ENCODE measurements at regions of chr18 and their contacts with region 1.

Region 1: DNA sequence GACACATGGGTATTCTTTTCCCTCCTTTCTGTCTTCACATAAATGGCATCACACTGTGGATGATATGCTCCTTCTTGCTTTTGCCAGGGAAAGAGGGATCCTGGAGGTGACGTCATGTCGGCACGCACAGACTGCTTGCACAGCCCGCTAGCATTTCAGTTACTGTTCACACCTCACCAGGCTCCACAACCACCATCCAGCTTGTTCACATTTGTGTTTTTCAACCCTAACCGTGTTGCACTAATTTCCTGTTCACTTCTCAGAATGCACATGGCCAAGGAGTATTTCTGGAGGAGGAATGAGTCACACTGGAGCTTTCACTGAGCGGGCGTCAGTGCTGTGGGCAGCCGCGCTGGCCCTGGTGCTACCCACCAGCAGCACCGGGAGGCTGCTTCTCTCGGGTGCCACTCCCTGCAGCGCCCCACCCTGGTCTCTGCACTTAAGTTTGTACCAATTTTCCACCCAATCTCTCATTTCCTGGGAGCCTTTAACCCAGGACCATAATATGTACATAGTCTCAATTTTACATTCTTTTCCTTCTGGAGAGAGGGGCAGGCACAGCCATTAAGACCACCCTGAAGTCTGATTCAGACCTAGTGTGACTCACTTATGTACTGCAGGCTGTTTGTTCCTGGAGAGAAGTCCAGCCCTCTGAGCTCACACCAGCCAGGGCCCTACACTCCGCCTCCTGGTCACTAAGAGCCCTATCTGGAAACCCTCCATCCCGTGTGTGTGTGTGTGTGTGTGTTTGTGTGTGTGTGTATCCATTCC is 65.1 kb downstream of the MBP start:
- DNase-seq: no peak
- ATAC-seq: peak; percentile 32
- H3K4me3 Mint-ChIP-seq: peak overlapping the region; percentile 64
- H3K27ac Mint-ChIP-seq: peak overlapping the region; percentile 94
- H3K4me1 Mint-ChIP-seq: peaks cover 100% of the 10 kb centered on the region
- H3K27me3 Mint-ChIP-seq: no peaks in the 10 kb centered on the region
- CTCF ChIP-seq: no peak

Region 2: GRCh38 chr18:76822510-76823160 is 244.8 kb before region 1 on chr18 and contains the start of gene ZNF236:
- CTCF ChIA-PET with region 1: no interaction called
- POLR2A ChIA-PET with region 1: no interaction called
- intact Hi-C with region 1: loop called (anchors 1 kb)
- DNase-seq: peak; percentile 79
- ATAC-seq: peak; percentile 58
- H3K4me3 Mint-ChIP-seq: peak within 1 kb of the TSS; percentile 95
- H3K27ac Mint-ChIP-seq: peak within 1 kb of the TSS; percentile 97
- H3K4me1 Mint-ChIP-seq: peaks cover 64% of the 10 kb centered on the region
- H3K27me3 Mint-ChIP-seq: no peaks in the 10 kb centered on the region
- CTCF ChIP-seq: no peak
- total RNA-seq, gene ZNF236: 27.4 and 28.2 TPM in 2 replicates

Region 3: GRCh38 chr18:77079954-77080682 is 12.6 kb after region 1 on chr18:
- CTCF ChIA-PET with region 1: interaction called, 3 read pairs
- POLR2A ChIA-PET with region 1: interaction called, 13 read pairs
- intact Hi-C with region 1: loop called (anchors 1 kb)
- DNase-seq: peak; percentile 60
- ATAC-seq: peak; percentile 99
- H3K4me3 Mint-ChIP-seq: peak overlapping the region; percentile 45
- H3K27ac Mint-ChIP-seq: peak overlapping the region; percentile 84
- H3K4me1 Mint-ChIP-seq: peaks cover 52% of the 10 kb centered on the region
- H3K27me3 Mint-ChIP-seq: no peaks in the 10 kb centered on the region
- CTCF ChIP-seq: no peak

Region 4: GRCh38 chr18:77108001-77108692 is 40.7 kb after region 1 on chr18:
- CTCF ChIA-PET with region 1: interaction called, 6 read pairs
- POLR2A ChIA-PET with region 1: interaction called, 23 read pairs
- intact Hi-C with region 1: no loop called
- DNase-seq: no peak
- ATAC-seq: peak; percentile 59
- H3K4me3 Mint-ChIP-seq: peak overlapping the region; percentile 29
- H3K27ac Mint-ChIP-seq: peak overlapping the region; percentile 77
- H3K4me1 Mint-ChIP-seq: peaks cover 70% of the 10 kb centered on the region
- H3K27me3 Mint-ChIP-seq: no peaks in the 10 kb centered on the region
- CTCF ChIP-seq: no peak

Region 5: GRCh38 chr18:77147418-77147852 is 80.0 kb after region 1 on chr18:
- CTCF ChIA-PET with region 1: no interaction called
- POLR2A ChIA-PET with region 1: no interaction called
- intact Hi-C with region 1: loop called (anchors 1 kb)
- DNase-seq: peak; percentile 37
- ATAC-seq: peak; percentile 76
- H3K4me3 Mint-ChIP-seq: peak overlapping the region; percentile 66
- H3K27ac Mint-ChIP-seq: peak overlapping the region; percentile 96
- H3K4me1 Mint-ChIP-seq: peaks cover 46% of the 10 kb centered on the region
- H3K27me3 Mint-ChIP-seq: no peaks in the 10 kb centered on the region
- CTCF ChIP-seq: no peak

Measured in activated B cell treated with CpG ODN at 0.5 μM for 24 hours (primary cell).